Psoas muscle (tissue), 8 donors: ENCODE measurements at regions of chr12 and their contacts with region 1.

Region 1: DNA sequence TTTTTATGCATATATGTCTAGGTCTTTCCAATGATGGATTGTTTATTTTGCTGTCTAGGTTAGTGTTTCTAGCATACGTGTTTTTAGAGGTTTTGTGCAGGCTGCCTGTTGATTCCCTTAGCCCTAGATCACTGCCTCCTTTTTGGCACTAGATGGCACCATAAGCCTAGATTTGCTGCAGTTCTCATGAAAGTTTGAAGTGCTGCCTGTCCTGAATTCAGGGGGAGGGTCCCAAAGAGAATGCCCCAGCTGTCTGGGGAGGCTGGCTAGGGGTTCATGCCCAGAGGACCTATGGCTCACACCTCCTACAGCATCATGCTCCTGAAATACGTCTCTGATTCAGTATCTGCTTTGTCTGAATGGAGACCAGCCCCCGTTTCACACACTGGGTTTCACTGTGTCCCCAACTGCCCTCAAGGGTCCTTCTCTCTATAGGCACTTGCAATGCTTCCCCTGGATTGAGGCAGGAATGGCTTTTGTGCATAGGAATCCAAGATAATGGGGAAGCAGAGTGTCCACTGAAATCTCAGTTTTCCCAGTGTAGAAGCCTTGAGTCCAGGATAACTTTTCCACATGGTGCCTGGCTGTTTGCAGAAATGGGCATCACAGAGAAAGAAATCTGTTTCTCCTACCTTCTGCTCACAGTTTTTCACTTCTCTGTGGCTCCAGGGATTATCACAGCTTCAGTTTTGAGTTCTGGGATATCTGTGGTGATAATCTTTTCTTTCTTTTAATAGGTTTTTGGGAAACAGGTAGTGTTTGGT is 14.2 kb upstream of the TXNRD1 start:
- DNase-seq: no peak
- ATAC-seq: peak in 3 of 4 donors; percentile 76 to 90 (median 77)
- H3K4me3 ChIP-seq: no peak overlapping the region
- H3K27ac ChIP-seq: no peak overlapping the region
- H3K4me1 ChIP-seq: no peaks in the 10 kb centered on the region
- H3K27me3 ChIP-seq: no peaks in the 10 kb centered on the region
- CTCF ChIP-seq: peak; percentile 78

Region 2: DNA sequence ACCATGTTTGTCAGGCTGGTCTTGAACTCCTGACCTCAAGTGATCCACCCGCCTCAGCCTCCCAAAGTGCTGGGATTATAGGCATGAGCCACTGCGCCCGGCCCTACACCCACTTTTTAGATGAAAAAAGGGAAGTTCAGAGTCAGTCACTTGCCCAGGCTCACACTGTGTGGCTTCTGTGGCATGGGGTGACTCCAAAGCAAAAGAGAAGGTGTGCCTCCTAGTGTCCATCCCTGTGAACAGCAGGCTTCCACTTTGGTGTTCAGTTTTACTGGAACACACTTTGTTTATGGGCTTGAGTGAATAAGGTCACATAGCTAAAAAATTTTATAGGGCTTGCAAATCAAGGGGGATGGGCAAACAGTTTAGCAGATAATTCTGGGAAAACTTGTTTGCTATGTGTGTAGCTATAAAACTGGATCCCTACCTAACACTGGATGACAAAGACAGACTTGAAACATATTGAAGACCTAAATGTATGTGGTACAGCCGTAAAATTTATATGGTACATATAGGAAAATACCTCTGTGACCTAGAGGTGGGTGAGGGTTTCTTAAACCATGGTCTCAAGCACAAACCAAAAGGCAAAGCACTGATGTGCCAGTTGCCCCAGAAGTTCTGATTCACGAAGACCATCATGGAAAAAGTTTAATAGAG is 157.1 kb after region 1 on chr12:
- intact Hi-C with region 1: loop called (anchors 5 kb)
- DNase-seq: peak; percentile 32 to 67
- ATAC-seq: peak; percentile 56 to 84 (median 76)
- H3K4me3 ChIP-seq: no peak overlapping the region
- H3K27ac ChIP-seq: no peak overlapping the region
- H3K4me1 ChIP-seq: no peaks in the 10 kb centered on the region
- H3K27me3 ChIP-seq: no peaks in the 10 kb centered on the region
- CTCF ChIP-seq: peak; percentile 78

Region 3: DNA sequence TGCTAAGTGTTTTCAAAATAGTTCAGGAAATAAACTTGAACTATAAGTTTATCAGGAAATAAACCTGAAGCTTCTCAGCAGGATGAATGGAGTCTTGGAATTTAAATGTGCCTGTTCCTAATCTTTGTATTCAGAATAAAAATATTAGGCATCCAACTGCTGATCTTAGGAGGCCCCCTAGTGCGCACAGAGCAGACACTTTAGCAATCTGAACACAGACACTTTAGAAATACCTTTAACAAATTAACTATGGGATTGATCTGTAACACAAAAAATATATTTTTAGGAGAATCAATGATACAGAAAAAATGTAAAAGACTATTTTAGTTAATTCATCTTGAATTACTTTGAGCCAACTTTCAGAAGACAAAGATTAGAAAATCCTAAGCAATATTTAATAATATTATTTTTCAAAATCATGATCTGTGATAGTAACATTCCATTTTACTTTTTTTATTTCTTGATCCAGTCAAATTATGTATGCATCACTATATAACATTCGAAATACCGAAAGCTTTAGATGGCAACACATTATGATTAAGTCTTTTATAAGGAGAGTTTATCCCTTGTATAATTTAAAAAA is 675.8 kb after region 1 on chr12:
- intact Hi-C with region 1: loop called in 1 of 2 experiments (anchors 10 kb)
- DNase-seq: peak in 1 of 2 donors; percentile 24
- ATAC-seq: peak in 2 of 4 donors; percentile 69
- H3K4me3 ChIP-seq: no peak overlapping the region
- H3K27ac ChIP-seq: no peak overlapping the region
- H3K4me1 ChIP-seq: no peaks in the 10 kb centered on the region
- H3K27me3 ChIP-seq: no peaks in the 10 kb centered on the region
- CTCF ChIP-seq: peak; percentile 63

Region 4: DNA sequence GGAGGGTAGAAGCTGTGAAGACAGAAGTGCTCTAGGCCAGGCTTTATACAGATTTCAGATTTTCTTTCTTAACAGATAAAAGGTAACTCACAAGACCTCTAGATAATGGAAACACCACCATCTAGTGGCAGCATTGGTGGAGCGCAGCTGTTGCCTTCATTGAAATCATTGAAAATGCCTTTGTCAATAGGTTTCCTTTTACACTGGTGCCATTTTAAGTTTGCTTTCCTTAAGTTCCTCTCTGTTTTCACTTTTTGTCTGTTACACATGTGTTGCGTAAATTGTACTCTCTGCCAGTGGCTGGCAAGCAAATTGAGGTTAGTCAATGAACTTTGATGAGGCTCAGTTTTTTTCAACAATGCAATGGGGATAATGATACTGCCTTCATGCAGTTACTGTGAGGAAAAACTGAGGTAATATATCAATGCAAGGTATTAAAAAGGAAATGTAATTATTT is 851.7 kb after region 1 on chr12:
- intact Hi-C with region 1: loop called (anchors 2 to 5 kb)
- DNase-seq: peak; percentile 63 to 73
- ATAC-seq: peak in 3 of 4 donors; percentile 48 to 84 (median 72)
- H3K4me3 ChIP-seq: no peak overlapping the region
- H3K27ac ChIP-seq: no peak overlapping the region
- H3K4me1 ChIP-seq: no peaks in the 10 kb centered on the region
- H3K27me3 ChIP-seq: no peaks in the 10 kb centered on the region
- CTCF ChIP-seq: peak; percentile 95

Region 5: DNA sequence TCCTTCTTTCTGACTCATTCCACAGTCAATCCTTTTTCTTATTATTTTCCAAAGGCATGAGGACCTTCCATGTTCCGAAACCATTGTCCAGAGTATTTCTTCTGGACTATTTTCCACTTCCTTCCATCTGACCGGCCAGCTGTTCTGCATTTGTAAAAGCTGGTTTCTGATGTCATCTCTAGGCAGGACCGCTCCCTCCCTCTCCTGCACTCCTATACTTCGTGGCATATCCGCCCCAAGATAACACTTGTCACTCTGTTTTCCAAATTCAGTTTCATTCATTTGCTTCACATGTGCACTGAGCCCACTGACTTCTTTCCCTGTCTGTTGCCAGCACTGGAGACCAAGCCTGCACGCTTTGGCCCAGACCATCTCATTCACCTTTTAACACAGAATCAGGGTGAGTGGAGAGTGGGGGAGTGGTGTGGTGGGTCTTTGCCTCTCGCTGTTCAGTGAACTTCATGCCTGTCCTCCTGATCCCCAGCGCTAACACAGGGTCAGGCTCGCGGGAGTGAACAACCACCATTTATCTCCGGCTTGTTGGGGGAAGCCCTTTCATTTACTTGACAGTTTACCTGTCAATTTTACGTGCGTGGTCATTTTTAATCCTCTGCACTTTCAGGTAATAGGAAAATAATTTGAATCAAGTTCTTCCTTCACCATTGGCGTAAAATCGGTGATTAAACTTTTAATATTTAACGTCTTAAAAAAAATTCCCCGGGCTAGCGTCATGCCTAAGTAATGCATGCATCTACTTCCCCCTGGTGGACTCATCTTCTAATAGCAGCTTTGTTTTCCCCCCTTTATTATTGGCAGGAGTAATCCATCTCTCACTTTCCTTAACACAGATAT is 1181.6 kb after region 1 on chr12:
- intact Hi-C with region 1: loop called in 1 of 2 experiments (anchors 10 kb)
- DNase-seq: no peak
- ATAC-seq: peak; percentile 74 to 91 (median 81)
- H3K4me3 ChIP-seq: peak overlapping the region; percentile 49
- H3K27ac ChIP-seq: no peak overlapping the region
- H3K4me1 ChIP-seq: no peaks in the 10 kb centered on the region
- H3K27me3 ChIP-seq: no peaks in the 10 kb centered on the region
- CTCF ChIP-seq: peak; percentile 81